ENCODE measurements at regions of chr2 and their contacts with region 1.

Region 1: DNA sequence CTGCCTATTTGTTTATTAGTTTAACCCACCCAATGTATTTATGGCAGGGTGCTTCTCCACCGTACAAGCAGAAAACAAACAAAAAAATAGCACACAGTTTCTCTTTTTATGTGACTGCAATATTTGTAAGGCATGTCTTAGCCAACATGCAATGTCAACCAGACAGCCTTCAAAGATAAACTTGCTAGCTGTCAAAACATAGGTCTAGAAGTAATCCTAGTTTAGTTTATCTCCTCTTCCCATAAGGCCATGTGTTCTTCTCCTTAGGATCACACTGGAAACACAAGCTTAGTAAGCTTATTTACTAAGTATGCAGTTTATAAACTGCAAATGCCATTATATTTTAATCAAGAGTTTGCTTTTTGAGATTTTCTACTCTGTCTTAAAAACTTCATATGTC is 75.6 kb downstream of the LDAH start:
- DNase-seq: peak; percentile 16 to 67 (median 47)
- ATAC-seq: peak; percentile 94
- H3K4me3 ChIP-seq: no peak overlapping the region
- H3K27ac ChIP-seq: no peak overlapping the region
- H3K4me1 ChIP-seq: peaks cover 0 to 2% of the 10 kb centered on the region in 2 experiments; a peak in 1 of 5 replicates
- H3K27me3 ChIP-seq: no peaks in the 10 kb centered on the region
- CTCF ChIP-seq: no peak
- EP300 ChIP-seq: peak; percentile 67; the same call in 1 of the 2 replicates
- POLR2A ChIP-seq: no peak
- RAD21 ChIP-seq: no peak

Region 2: DNA sequence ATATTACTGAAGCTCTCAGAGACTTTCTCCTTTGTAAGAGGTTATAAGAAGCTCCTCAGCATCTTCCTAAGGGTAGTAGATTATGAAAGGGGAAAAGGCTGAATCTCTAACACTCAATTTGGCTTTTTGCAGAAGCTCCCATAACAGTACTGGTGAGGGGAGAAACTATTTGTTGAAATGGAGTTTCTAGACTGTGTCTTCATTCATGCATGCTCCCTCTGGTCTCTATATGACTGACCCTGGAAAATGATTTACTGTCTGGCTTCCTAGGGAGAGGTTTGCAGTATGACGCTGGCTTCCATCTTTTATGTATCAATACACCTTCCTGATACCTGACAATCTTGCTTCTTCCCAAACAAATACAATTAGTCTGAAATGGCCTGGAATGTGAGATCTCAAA is 11.7 kb after region 1 on chr2:
- CTCF ChIA-PET with region 1: no interaction called
- POLR2A ChIA-PET with region 1: interaction called, 21 read pairs
- in situ Hi-C with region 1: no loop called
- intact Hi-C with region 1: no loop called
- DNase-seq: no peak
- ATAC-seq: no peak
- H3K4me3 ChIP-seq: no peak overlapping the region
- H3K27ac ChIP-seq: no peak overlapping the region
- H3K4me1 ChIP-seq: no peaks in the 10 kb centered on the region
- H3K27me3 ChIP-seq: no peaks in the 10 kb centered on the region
- CTCF ChIP-seq: no peak
- EP300 ChIP-seq: no peak
- POLR2A ChIP-seq: no peak
- RAD21 ChIP-seq: no peak